ENCODE measurements at regions of chr4 and their contacts with region 1.

Region 1: DNA sequence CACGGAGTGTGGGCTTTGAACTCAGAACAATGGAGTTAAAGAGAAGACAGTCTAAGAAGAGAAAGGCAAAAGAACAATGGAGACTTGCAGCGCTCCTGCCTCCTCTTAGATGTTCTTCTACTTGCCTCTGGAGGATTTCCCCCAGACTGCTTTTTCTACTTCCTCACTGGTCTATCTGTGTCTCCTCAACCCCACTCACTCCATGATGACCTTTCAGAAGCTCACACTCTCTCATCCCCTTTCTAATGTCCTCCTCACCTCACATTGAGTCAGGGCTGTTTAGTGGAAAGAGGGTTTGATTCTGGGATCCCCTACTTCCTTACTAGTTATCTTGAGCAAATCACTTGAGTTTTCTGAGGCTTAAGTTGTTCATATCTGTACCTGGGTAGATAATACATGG is 12.2 kb upstream of the HERC6 start:
- DNase-seq: no peak
- H3K4me3 ChIP-seq: no peak overlapping the region
- H3K27ac ChIP-seq: no peak overlapping the region
- H3K4me1 ChIP-seq: no peaks in the 10 kb centered on the region
- H3K27me3 ChIP-seq: no peaks in the 10 kb centered on the region
- CTCF ChIP-seq: no peak

Region 2: DNA sequence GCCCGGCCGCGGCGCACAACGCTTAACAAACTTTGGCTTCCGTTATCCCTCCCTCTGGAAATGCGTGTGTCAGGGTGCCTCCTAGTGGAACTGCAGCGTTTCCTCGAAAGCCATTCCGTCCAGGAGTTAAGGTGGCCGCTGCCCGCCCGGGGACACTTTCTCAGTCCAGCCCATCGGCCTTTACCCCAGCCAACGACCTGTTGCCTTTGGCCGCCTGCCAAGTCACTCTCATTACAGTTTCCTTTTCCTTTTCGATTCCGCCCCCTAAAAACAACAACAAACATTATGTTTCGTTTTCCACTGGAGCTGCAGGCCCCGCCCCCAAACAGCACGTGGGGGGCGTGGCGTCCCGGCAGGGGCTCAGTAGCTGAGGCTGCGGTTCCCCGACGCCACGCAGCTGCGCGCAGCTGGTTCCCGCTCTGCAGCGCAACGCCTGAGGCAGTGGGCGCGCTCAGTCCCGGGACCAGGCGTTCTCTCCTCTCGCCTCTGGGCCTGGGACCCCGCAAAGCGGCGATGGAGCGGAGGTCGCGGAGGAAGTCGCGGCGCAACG is 90.4 kb after region 1 on chr4 and contains the start of gene HERC5:
- CTCF ChIA-PET with region 1: no interaction called
- POLR2A ChIA-PET with region 1: no interaction called
- intact Hi-C with region 1: loop called (anchors 10 kb)
- DNase-seq: peak; percentile 79
- H3K4me3 ChIP-seq: peak within 1 kb of the TSS; percentile 46
- H3K27ac ChIP-seq: no peak within 1 kb of the TSS
- H3K4me1 ChIP-seq: no peaks in the 10 kb centered on the region
- H3K27me3 ChIP-seq: peaks cover 14% of the 10 kb centered on the region
- CTCF ChIP-seq: peak; percentile 53
- total RNA-seq, gene HERC5: 0.54 and 1.2 TPM in 2 replicates

Region 3: DNA sequence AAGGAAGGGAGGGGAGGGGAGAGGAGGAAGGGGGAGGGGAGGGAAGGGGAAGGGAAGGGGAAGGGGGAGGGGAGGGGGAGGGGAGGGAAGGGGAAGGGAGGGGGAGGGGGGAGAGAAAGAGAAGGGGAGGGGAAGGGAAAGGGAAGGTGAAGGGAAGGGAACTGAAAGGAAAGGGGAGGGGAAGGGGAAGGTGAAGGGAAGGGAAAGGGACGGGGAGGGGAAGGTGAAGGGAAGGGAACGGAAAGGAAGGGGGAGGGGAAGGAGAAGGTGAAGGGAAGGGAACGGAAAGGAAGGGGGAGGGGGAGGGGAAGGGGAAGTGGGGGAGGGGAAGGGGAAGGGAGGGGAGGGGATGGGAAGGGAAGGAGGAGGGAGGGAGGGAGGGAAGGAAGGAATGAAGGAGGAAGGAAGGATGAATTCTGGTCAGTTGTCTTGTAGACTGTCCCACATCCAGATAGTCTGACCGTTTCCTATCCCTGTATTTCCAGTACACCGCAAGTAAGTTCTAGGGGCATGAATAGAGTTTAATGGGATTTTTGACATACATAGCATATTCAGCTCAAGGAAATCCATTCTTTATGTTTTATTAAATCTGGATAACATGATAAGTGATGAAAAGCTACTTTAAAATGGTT is 110.9 kb after region 1 on chr4:
- CTCF ChIA-PET with region 1: no interaction called
- POLR2A ChIA-PET with region 1: no interaction called
- intact Hi-C with region 1: no loop called
- DNase-seq: no peak
- H3K4me3 ChIP-seq: no peak overlapping the region
- H3K27ac ChIP-seq: no peak overlapping the region
- H3K4me1 ChIP-seq: no peaks in the 10 kb centered on the region
- H3K27me3 ChIP-seq: no peaks in the 10 kb centered on the region
- CTCF ChIP-seq: no peak

Region 4: DNA sequence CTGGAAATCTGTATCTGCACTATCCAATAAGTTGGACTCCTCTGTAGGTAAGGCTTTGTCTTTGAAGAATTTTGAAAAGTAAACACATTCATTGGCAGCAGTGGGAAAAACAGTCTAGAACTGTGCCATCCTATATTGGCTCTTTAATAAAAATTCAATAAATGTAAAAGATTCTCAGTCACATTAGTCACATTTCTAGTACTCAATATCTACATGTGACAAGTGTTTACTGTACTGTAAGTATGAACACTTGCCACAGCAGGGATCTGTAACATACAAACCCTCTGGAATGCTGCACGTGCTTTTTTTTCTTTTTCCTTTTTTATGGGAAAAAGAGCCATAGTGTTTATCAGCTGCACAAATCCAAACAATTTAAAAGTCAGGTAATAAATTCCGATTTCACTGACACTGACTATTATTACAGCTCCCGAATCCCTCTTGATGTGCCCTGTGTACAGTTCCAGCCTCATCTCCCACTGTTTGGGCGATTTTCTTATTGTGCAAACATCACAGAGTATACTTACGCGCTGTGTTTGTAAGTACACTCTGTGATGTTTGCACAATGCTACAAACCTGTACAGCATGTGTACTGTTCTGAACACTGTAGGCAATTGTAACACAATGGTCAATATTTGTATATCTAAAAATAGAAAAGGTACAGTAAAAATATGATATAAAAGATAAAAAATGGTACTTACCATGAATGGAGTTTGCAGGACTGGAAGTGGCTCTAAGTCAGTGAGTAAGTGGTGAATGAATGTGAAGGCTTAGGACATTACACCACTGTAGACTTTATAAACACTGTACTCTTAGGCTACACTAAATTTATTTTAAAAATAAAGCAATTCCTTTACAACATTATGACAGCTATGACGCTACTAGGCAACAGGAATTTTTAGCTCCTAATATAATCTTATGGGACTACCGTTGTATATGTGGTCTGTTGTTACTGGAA is 148.4 kb after region 1 on chr4:
- CTCF ChIA-PET with region 1: interaction called, 3 read pairs
- POLR2A ChIA-PET with region 1: no interaction called
- intact Hi-C with region 1: loop called (anchors 2 kb)
- DNase-seq: no peak
- H3K4me3 ChIP-seq: no peak overlapping the region
- H3K27ac ChIP-seq: no peak overlapping the region
- H3K4me1 ChIP-seq: no peaks in the 10 kb centered on the region
- H3K27me3 ChIP-seq: no peaks in the 10 kb centered on the region
- CTCF ChIP-seq: no peak

Region 5: DNA sequence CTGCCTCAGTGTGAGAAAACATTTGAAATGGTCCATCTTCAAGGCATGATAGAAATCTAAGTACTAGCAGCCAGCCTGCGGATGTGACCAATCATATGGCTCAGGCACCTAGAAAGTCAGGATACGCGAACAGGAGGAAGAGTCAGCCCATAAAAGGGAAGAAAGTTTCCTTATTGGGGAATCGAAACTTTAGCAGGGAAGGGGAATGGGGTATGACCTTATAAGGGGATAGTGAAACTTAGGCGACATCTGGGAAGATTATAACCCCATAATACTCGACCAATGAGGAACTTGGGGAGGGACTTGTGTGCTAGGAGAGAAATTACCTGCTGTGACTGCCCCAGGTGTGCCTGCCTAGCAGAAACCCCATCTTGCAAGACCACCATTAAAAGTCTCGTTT is 183.4 kb after region 1 on chr4:
- CTCF ChIA-PET with region 1: no interaction called
- POLR2A ChIA-PET with region 1: no interaction called
- intact Hi-C with region 1: no loop called
- DNase-seq: no peak
- H3K4me3 ChIP-seq: no peak overlapping the region
- H3K27ac ChIP-seq: no peak overlapping the region
- H3K4me1 ChIP-seq: no peaks in the 10 kb centered on the region
- H3K27me3 ChIP-seq: no peaks in the 10 kb centered on the region
- CTCF ChIP-seq: no peak